AG04450 (cell line): ENCODE measurements at regions of chr18 and their contacts with region 1.

Region 1: DNA sequence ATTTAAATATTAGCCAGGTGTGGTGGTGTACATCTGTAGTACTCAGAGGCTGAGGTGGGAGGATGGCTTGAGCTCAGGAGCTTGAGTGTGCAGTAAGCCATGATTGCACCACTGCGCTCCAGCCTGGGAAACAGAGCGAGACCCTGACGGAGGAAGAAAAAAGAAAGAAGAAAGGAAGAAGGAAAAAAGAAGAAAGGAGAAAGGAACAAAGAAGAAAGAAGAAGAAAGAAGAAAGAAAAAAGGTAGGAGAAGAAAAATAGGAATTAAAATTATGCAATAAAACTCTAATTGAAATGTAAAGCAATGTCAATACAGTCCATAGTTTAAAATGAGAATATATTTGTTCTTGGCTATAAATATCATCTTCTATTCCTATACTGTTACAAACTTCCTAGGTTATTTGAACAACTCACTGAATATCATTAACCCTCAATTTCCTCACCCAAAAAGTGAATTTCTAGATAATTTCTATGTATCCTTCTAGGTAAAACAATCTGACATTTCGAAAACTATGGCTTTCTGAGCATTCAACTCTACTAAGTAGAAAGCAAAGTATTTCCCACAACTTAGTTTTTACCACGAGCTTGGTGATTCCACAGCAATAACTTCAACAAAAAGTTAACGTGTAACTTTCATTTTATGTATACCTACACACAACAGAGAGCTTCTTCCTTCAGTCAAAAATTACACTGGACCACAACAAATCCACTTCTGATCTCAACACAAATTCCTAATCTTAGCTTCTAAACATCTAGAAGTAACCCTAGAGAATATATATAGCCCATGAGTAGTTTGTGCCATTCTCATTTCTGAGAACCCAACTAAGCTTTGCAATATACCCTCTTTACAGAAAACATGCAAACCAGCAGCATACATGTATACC is 19.7 kb downstream of the LPIN2 start:
- DNase-seq: no peak
- H3K4me3 ChIP-seq: no peak overlapping the region
- H3K27ac ChIP-seq: no peak overlapping the region
- H3K27me3 ChIP-seq: no peaks in the 10 kb centered on the region
- CTCF ChIP-seq: no peak

Region 2: DNA sequence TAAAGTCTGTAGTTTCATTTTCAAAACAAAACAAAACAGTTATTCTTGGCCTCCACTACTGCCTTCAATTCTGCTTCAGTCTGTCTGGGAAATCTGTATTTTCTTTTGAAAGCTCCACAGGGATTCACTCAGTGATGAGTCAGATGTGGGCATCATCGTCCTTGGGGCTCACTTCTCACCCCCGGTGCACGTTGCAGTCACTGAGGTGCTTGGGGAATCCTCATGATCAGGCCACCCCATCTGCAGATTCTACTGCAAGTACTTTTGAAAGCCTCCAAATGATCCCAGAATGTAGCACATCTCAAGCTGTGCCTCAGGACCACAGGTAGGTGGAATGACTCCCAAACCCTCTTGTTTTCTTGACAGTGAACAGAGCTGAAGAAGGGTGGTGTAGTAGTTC is 14.6 kb before region 1 on chr18:
- CTCF ChIA-PET with region 1: no interaction called
- POLR2A ChIA-PET with region 1: no interaction called
- DNase-seq: peak; percentile 34
- H3K4me3 ChIP-seq: peak overlapping the region; percentile 8
- H3K27ac ChIP-seq: peak overlapping the region; percentile 90
- H3K27me3 ChIP-seq: no peaks in the 10 kb centered on the region
- CTCF ChIP-seq: no peak

Region 3: DNA sequence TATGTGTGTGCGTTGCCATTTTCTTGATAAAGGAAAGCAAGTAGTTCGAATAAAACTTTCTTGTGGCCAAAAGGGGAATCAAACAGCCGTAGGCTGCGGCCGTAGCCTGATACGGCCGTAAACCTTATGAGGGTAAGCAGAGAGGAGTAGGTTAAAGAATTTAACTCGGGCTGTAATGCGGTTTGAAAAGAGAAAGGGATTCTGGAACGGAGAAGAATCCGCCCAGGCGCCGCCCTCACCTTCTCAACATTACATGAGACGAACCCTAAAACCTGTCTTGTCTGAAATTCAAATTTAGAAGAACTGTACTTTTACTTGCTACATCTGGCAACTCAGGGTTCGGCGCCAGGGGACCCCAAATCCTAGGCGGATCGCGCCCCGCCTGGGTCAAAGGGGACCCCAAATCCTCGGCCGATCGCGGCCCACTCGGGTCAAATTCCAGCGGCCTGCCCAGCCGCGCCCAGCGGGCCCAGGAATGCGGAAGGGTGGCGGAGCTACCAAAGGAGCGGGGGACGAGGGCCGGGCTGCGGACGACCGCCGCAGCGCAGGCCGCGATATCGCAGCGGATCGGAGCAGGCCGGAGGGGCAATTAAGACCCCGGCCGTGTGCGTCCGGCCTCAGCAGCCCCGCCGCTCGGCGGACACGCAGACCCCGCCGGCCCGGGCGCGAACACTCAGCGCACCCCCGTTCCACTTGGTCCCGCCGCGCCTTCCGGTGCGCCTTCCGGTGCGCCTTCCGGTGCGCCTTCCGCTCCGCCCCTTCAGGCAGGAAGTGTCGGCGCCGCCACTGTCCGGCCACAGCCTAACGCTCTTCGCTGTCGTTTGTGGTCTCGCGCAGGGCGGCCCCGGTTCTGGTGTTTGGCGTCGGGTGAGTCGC is 268.4 kb after region 1 on chr18 and contains the start of gene MYL12B:
- CTCF ChIA-PET with region 1: no interaction called
- POLR2A ChIA-PET with region 1: interaction called, 17 read pairs
- DNase-seq: no peak
- H3K4me3 ChIP-seq: peak within 1 kb of the TSS; percentile 93
- H3K27ac ChIP-seq: peak within 1 kb of the TSS; percentile 95
- H3K27me3 ChIP-seq: no peaks in the 10 kb centered on the region
- CTCF ChIP-seq: 0 out of 2 replicates have a peak, but pooled peaks have one; percentile 2
- polyA plus RNA-seq, gene MYL12B: 682 and 787 TPM in 2 replicates